Heart right ventricle (tissue), 16 donors: ENCODE measurements at regions of chr19 and their contacts with region 1.

Region 1: GRCh38 chr19:15779756-15780476 is 7.5 kb upstream of the OR10H5 start:
- DNase-seq: peak; percentile 76 to 88
- ATAC-seq: peak; percentile 89 to 96 (median 94)
- H3K4me3 ChIP-seq: peak overlapping the region in 5 of 10 donors; percentile 26 to 37 (median 35)
- H3K27ac ChIP-seq: peak overlapping the region; percentile 46 to 89 (median 72)
- H3K4me1 ChIP-seq: peaks cover 2 to 36% (median 18%) of the 10 kb centered on the region in 9 donors
- H3K27me3 ChIP-seq: peaks cover 0 to 5% (median 0%) of the 10 kb centered on the region in 7 donors
- CTCF ChIP-seq: no peak

Region 2: GRCh38 chr19:15672580-15673175 is 107.2 kb before region 1 on chr19 and contains the start of gene CYP4F12:
- intact Hi-C with region 1: loop called in 2 of 10 experiments (anchors 5 to 10 kb)
- DNase-seq: peak; percentile 88 to 92
- ATAC-seq: peak; percentile 95 to 100 (median 98)
- H3K4me3 ChIP-seq: peak within 1 kb of the TSS in 8 of 10 donors; percentile 3 to 40 (median 25)
- H3K27ac ChIP-seq: peak within 1 kb of the TSS in 9 of 10 donors; percentile 20 to 78 (median 56)
- H3K4me1 ChIP-seq: peaks cover 0 to 15% (median 10%) of the 10 kb centered on the region in 9 donors
- H3K27me3 ChIP-seq: peaks cover 0 to 13% (median 0%) of the 10 kb centered on the region in 7 donors
- CTCF ChIP-seq: no peak
- total RNA-seq, gene CYP4F12: 0.92 to 6.8 (median 2.7) TPM

Region 3: GRCh38 chr19:15730538-15730937 is 49.4 kb before region 1 on chr19:
- intact Hi-C with region 1: loop called in 1 of 10 experiments (anchors 5 kb)
- DNase-seq: no peak
- ATAC-seq: no peak
- H3K4me3 ChIP-seq: no peak overlapping the region
- H3K27ac ChIP-seq: no peak overlapping the region
- H3K4me1 ChIP-seq: peaks cover 0 to 6% (median 0%) of the 10 kb centered on the region in 9 donors
- H3K27me3 ChIP-seq: peaks cover 0 to 11% (median 4%) of the 10 kb centered on the region in 7 donors
- CTCF ChIP-seq: no peak

Region 4: DNA sequence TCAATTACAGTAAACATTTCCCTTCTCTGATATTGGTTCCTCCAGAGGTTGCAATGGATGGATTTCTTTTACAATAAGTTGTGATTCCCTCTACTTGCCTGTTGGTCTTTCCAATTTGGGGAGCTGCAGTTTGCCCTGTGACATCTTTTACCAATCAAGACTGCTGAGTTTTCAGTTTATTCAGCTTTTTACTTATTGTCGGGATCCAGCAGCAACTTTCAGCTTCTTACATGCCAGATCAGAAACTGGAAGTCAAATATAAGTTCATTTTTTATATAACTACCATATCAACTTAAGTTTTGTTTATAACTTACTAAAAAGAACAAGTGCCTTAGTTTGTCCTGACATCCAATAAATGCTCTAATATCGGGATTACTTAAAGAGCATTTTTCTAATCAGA is 31.7 kb before region 1 on chr19:
- intact Hi-C with region 1: no loop called
- DNase-seq: no peak
- ATAC-seq: no peak
- H3K4me3 ChIP-seq: no peak overlapping the region
- H3K27ac ChIP-seq: no peak overlapping the region
- H3K4me1 ChIP-seq: no peaks in the 10 kb centered on the region
- H3K27me3 ChIP-seq: peaks cover 0 to 77% (median 26%) of the 10 kb centered on the region in 7 donors
- CTCF ChIP-seq: no peak